PC-9 (cell line): ENCODE measurements at regions of chr9 and their contacts with region 1.

Region 1: GRCh38 chr9:128911529-128912035 is 9.2 kb upstream of the PHYHD1 start:
- DNase-seq: peak; percentile 64 to 81
- H3K4me3 ChIP-seq: peak overlapping the region; percentile 7; the same call in 1 of the 2 replicates
- H3K27ac ChIP-seq: peak overlapping the region; percentile 96
- H3K4me1 ChIP-seq: peaks cover 44% of the 10 kb centered on the region
- H3K27me3 ChIP-seq: no peaks in the 10 kb centered on the region
- CTCF ChIP-seq: no peak

Region 2: GRCh38 chr9:128688512-128689292 is 222.9 kb before region 1 on chr9 and contains the start of gene SET:
- CTCF ChIA-PET with region 1: no interaction called
- POLR2A ChIA-PET with region 1: no interaction called
- intact Hi-C with region 1: loop called (anchors 5 kb)
- DNase-seq: peak; percentile 71 to 98
- H3K4me3 ChIP-seq: peak within 1 kb of the TSS; percentile 80
- H3K27ac ChIP-seq: peak within 1 kb of the TSS; percentile 78
- H3K4me1 ChIP-seq: peaks cover 47% of the 10 kb centered on the region
- H3K27me3 ChIP-seq: no peaks in the 10 kb centered on the region
- CTCF ChIP-seq: no peak
- total RNA-seq, gene SET: 539 and 738 TPM in 2 replicates

Region 3: DNA sequence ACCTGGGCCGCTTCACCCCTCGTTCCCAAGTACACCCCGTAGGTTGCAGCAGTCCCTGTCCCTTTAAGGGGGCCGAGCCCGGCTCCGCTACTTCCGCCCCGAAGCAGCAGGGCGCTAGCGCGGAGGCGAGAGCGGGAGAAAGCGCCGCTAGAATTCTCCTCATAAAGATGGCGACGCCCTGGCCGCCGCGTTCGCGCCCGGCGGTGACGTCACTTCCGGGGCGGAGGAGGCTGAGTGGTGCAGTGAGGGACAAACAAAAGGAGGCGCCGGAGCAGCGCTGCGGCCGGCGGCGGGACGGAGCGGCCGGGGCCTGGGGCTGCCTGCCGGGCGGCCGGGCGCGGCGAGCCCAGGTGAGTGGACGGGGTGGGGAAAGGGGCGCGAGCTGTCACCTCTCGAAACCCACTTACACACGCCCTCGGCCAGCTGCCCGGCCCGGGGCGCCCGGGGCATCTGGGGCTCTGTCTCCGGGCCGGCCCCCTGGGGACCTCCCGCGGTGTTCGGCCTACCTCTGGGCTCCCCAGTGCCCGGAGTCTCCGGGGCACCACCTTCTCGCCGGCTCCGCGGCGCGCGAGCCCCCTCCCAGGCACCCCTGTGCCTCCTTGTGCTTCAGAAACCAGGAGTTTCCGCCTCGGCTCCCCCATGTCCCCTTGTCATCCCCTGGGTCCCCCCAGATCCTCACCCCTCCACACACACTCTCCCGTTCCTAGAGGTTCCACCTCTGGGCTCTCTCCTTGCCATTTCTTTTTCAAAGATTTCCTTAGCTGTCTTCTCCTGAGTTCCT is 29.5 kb before region 1 on chr9 and contains the starts of genes KYAT1 and LRRC8A:
- CTCF ChIA-PET with region 1: interaction called, 7 read pairs
- POLR2A ChIA-PET with region 1: interaction called, 17 read pairs
- intact Hi-C with region 1: loop called (anchors 1 kb)
- DNase-seq: peak; percentile 89 to 99
- H3K4me3 ChIP-seq: peak within 1 kb of the TSS; percentile 87
- H3K27ac ChIP-seq: peak within 1 kb of the TSS; percentile 77
- H3K4me1 ChIP-seq: peaks cover 20% of the 10 kb centered on the region
- H3K27me3 ChIP-seq: no peaks in the 10 kb centered on the region
- CTCF ChIP-seq: no peak
- total RNA-seq, gene KYAT1: 26.1 and 27.6 TPM in 2 replicates
- total RNA-seq, gene LRRC8A: 90.3 and 95.7 TPM in 2 replicates

Region 4: GRCh38 chr9:128947422-128948301 is 36.1 kb after region 1 on chr9 and contains the starts of genes DOLK and NUP188:
- CTCF ChIA-PET with region 1: no interaction called
- POLR2A ChIA-PET with region 1: interaction called, 20 read pairs
- intact Hi-C with region 1: no loop called
- DNase-seq: peak; percentile 80 to 98
- H3K4me3 ChIP-seq: peak within 1 kb of the TSS; percentile 96
- H3K27ac ChIP-seq: peak within 1 kb of the TSS; percentile 61
- H3K4me1 ChIP-seq: peaks cover 6% of the 10 kb centered on the region; the same call in 1 of the 2 replicates
- H3K27me3 ChIP-seq: no peaks in the 10 kb centered on the region
- CTCF ChIP-seq: no peak
- total RNA-seq, gene DOLK: 18.0 and 19.0 TPM in 2 replicates
- total RNA-seq, gene NUP188: 59.7 and 90.0 TPM in 2 replicates